ENCODE measurements at regions of chr1 and their contacts with region 1.

Region 1: DNA sequence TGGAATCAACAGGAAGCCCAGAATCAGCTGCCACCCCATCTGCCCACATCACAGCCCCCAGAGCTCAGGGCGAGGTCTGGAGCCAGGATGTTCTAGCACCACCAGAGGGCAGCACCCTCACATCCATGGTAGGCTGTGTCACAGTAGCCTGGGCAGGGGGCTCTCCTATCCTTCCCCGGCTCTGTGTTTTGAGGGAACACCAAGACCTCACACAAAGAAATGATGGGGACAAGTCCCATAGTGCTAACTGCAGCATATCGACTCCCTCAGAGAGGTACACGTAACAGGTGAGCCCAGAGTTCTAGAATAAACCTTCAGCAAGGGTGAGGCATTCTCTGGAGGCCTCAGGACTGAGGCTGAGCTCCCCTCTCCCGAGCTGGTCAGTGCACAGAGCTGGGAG is 2.3 kb upstream of the KCNC4 start:
- DNase-seq: peak; percentile 52 to 89 (median 74)

Region 2: GRCh38 chr1:110118636-110119615 is 88.9 kb before region 1 on chr1:
- intact Hi-C with region 1: no loop called
- DNase-seq: peak in 1 of 42 donors; percentile 41

Region 3: DNA sequence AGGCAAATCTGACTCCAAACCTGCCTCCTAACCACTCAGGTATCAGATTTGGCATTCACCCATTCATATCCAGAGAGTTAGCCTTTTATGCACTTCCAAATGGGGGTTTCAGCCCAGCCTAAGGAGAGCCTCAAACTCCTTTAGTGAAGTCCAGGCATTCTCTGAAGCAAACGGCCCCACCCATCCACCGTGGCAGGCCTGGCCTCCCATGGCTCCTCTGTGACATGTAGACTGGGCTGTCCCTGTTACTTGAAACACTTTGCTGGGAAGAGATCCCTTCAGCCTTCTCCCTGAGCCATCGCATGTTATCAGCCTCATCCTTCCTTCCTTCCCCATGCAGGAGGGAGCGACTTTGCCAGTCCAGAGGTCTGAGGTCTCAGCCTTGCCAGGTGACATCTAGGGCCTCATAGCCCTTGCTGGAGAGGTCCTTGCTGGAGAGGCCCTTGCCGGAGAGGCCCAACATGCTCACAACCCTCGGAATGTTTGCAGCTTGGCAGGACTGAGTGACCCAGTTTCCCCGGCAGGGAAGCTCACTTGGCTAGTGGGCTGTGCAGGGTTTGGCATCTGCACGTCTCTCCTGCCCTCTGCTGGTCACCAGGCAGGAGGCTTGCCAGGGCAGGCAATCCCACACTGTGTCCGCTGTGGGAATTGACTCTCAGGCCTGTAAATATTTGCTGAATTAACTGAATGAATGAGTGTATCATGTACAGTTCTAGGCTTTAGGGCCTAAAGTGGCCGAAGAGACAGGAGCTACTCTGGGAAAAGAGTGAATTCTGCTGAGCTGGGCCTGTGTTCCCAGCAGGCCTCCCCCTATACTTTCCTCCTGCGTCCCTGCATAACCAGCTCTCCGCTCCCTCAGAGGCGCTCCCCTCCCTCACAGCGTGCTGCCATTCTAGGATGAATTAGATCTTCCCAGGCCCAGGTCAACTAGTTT is 104.6 kb after region 1 on chr1:
- intact Hi-C with region 1: loop called (anchors 2 kb)
- DNase-seq: peak; percentile 64 to 93 (median 84)

Region 4: DNA sequence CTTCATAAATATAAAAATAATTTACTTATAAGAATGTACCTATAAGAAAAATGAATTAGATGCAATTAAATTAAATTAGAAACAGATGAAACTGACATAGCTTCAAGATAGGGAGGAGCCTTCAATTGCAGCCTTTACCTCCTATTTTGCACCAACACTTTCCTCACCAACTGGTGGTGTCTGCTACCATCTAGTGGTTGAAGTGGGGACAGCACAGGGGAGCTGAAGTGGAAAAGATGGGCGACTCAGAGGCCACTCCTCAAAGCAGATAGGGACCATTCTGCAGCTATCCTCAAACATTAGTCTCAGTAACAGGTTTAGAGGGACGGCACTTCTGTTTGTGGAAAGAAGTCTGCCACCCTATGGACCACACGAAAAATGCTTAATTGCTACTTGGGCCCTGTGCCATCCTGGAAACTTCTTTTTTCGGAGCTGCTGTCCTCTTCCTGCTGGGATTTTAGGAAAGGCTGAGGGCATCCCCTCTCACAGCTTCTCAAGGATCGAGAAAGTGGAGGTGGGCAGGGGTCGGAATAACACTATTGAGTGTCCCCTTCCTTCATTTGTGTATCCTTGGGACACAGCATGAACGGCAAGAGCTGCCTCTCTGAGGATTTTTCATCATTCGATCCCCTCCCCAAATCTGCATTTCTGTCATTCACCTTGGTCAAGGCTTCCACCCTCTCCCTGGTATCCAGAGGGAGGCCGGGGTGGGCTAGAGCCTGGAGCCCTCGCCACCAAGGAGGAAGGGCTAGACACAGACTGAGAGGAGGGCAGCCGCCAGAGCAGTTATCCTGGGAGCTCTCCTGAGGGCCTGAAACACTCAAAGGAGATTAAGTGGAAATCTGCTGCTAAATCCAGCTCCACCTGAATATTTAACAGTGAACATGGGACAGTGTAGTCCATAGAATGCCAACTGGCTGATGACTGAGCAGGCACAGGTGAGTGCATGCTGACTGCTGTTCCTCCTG is 252.7 kb after region 1 on chr1:
- intact Hi-C with region 1: loop called (anchors 2 kb)
- DNase-seq: peak in 41 of 42 donors; percentile 50 to 93 (median 83)

Measured in head of caudate nucleus (tissue), 42 donors.